ENCODE measurements at regions of chr20 and their contacts with region 1.

Region 1: DNA sequence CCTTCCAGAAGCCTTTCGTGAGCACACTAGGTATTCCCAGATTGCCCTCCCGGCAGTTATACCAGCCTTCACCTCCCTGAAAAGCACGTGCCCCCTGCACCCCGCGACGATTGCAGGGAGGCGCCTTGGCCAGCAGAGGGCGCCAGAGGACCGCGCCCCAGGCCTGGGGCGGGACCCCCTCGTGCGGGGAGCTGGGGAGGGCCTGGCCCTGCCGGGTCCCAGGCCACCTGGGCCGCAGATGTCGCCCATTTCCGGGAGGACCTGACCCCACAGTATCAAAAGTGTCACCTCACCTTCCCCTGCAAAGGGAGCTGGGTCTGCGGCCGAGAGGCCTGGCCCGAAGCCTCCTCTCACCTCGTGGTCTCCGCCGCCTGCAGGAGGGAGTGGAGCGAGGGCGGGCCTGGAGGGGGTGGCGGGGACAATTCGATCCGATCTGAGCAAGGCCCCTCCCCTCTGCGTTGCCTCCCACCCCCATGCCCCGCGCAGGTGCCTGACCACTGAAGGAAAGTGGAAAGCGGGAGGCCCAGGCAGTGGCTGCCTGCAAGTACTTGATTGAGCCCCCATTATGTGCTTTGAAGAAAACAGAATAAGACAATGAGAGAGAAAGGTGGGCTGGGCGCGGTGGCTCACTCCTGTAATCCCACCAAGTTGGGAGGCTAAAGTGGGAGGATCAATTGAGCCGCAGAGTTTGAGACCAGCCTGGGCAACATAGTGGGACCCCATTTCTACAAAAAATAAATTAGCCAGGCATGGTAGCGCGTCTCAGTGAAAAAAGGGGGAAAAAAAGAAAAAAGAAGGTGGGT is 3.5 kb upstream of the SNAI1 start:
- DNase-seq: peak in 2 of 7 donors; percentile 31 to 53
- H3K4me3 ChIP-seq: peak overlapping the region in 1 of 4 donors; percentile 38
- H3K27ac ChIP-seq: no peak overlapping the region
- H3K4me1 ChIP-seq: peaks cover 7 to 17% of the 10 kb centered on the region in 2 donors
- H3K27me3 ChIP-seq: no peaks in the 10 kb centered on the region
- CTCF ChIP-seq: peak; percentile 97 to 100 (median 99)
- POLR2A ChIP-seq: peak in 1 of 2 donors; percentile 25

Region 2: GRCh38 chr20:49859846-49860245 is 119.4 kb before region 1 on chr20:
- intact Hi-C with region 1: no loop called
- DNase-seq: no peak
- H3K4me3 ChIP-seq: no peak overlapping the region
- H3K27ac ChIP-seq: no peak overlapping the region
- H3K4me1 ChIP-seq: no peaks in the 10 kb centered on the region
- H3K27me3 ChIP-seq: no peaks in the 10 kb centered on the region
- CTCF ChIP-seq: no peak
- POLR2A ChIP-seq: no peak

Region 3: GRCh38 chr20:50070991-50071888 is 92.0 kb after region 1 on chr20:
- intact Hi-C with region 1: loop called (anchors 1 to 2 kb)
- DNase-seq: peak; percentile 76 to 94 (median 90)
- H3K4me3 ChIP-seq: peak overlapping the region in 1 of 4 donors; percentile 38
- H3K27ac ChIP-seq: no peak overlapping the region
- H3K4me1 ChIP-seq: peaks cover 6 to 8% of the 10 kb centered on the region in 2 donors
- H3K27me3 ChIP-seq: no peaks in the 10 kb centered on the region
- CTCF ChIP-seq: peak; percentile 99 to 100 (median 100)
- POLR2A ChIP-seq: no peak

Region 4: DNA sequence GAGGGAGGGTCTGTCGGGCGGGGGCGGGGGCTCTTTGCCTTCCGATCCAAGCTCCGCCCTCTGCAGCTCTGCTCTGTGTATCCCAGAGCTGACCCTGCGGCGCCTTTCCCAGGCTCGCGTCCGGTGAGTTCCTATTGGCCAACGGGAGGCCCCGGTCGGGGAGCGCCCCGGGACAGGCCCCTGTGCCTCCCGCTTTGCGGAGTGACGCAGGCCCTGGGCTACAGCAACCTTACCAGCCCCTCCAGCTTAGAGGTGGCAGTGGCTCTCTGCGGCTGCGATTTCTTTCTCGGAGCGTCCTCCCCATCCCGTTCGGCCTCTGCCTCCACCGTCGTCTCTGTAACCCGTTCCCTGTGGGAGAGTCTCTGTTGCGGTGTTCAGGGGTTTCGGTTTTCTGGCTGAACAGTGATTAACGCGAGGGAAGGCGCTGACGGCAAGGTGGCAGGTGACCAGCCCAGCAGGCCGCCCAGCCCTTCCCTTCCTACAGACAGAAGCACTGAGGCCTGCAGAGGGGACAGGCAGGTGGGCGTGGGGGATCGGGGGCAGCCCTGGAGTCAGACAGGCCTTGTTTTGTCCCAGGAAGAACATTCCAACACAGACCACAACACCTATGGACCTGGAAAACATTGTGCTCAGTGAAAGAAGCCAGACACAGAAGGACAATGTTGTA is 193.2 kb after region 1 on chr20:
- intact Hi-C with region 1: loop called (anchors 10 kb)
- DNase-seq: peak; percentile 87 to 95 (median 92)
- H3K4me3 ChIP-seq: peak overlapping the region in 3 of 4 donors; percentile 33 to 68 (median 60)
- H3K27ac ChIP-seq: peak overlapping the region; percentile 70 to 93 (median 87)
- H3K4me1 ChIP-seq: peaks cover 3 to 16% of the 10 kb centered on the region in 2 donors
- H3K27me3 ChIP-seq: no peaks in the 10 kb centered on the region
- CTCF ChIP-seq: no peak
- POLR2A ChIP-seq: peak; percentile 70 to 93

Measured in adrenal gland (tissue), 19 donors.